ENCODE measurements at regions of chr13 and their contacts with region 1.

Region 1: GRCh38 chr13:35512271-35512920 is 35.9 kb upstream of the MAB21L1 start:
- DNase-seq: peak; percentile 90
- ATAC-seq: peak; percentile 85
- H3K4me3 ChIP-seq: no peak overlapping the region
- H3K27ac ChIP-seq: no peak overlapping the region
- H3K4me1 ChIP-seq: no peaks in the 10 kb centered on the region
- H3K27me3 ChIP-seq: no peaks in the 10 kb centered on the region
- CTCF ChIP-seq: no peak
- POLR2A ChIP-seq: no peak
- RAD21 ChIP-seq: no peak

Region 2: GRCh38 chr13:35534343-35534742 is 21.9 kb after region 1 on chr13:
- CTCF ChIA-PET with region 1: interaction called, 11 read pairs
- POLR2A ChIA-PET with region 1: no interaction called
- dilution Hi-C with region 1: no loop called
- in situ Hi-C with region 1: no loop called
- intact Hi-C with region 1: no loop called
- DNase-seq: no peak
- ATAC-seq: no peak
- H3K4me3 ChIP-seq: no peak overlapping the region
- H3K27ac ChIP-seq: no peak overlapping the region
- H3K4me1 ChIP-seq: no peaks in the 10 kb centered on the region
- H3K27me3 ChIP-seq: no peaks in the 10 kb centered on the region
- CTCF ChIP-seq: no peak
- POLR2A ChIP-seq: no peak
- RAD21 ChIP-seq: no peak